ENCODE measurements at regions of chr6 and their contacts with region 1.

Region 1: DNA sequence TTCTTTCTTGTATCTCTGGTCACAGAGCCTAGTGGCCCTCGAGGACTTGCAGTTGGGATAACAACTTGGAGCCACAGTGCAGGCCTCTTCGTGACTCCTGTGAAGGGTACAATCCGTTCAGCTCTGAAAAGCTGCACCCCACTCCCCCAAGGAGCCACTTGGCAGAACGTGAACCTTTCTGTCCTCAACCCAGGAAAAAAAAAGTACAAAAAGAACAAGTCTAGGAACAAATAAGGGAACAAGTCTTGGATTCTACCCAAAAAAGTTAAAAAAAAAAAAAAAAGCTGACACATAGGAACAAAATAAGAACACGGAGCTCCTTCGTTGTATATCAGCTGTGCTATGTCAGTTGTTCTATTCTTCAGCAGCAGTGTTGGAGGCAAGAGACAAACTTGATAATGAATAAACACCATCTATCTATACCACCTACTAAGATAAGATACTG is 77.9 kb upstream of the TULP1 start:
- DNase-seq: no peak
- ATAC-seq: no peak
- H3K4me3 ChIP-seq: no peak overlapping the region
- H3K4me3 Mint-ChIP-seq: no peak overlapping the region
- H3K27ac ChIP-seq: peak overlapping the region in 1 of 2 experiments; percentile 46
- H3K27ac Mint-ChIP-seq: peak overlapping the region; percentile 94
- H3K4me1 ChIP-seq: peaks cover 86% of the 10 kb centered on the region
- H3K4me1 Mint-ChIP-seq: peaks cover 92% of the 10 kb centered on the region
- H3K27me3 ChIP-seq: no peaks in the 10 kb centered on the region
- H3K27me3 Mint-ChIP-seq: no peaks in the 10 kb centered on the region
- CTCF ChIP-seq: no peak

Region 2: GRCh38 chr6:35340910-35341309 is 249.7 kb before region 1 on chr6:
- CTCF ChIA-PET with region 1: no interaction called
- POLR2A ChIA-PET with region 1: no interaction called
- intact Hi-C with region 1: no loop called
- DNase-seq: no peak
- ATAC-seq: no peak
- H3K4me3 ChIP-seq: no peak overlapping the region
- H3K4me3 Mint-ChIP-seq: no peak overlapping the region
- H3K27ac ChIP-seq: no peak overlapping the region
- H3K27ac Mint-ChIP-seq: no peak overlapping the region
- H3K4me1 ChIP-seq: peaks cover 29% of the 10 kb centered on the region
- H3K4me1 Mint-ChIP-seq: peaks cover 40% of the 10 kb centered on the region
- H3K27me3 ChIP-seq: no peaks in the 10 kb centered on the region
- H3K27me3 Mint-ChIP-seq: no peaks in the 10 kb centered on the region
- CTCF ChIP-seq: no peak

Region 3: DNA sequence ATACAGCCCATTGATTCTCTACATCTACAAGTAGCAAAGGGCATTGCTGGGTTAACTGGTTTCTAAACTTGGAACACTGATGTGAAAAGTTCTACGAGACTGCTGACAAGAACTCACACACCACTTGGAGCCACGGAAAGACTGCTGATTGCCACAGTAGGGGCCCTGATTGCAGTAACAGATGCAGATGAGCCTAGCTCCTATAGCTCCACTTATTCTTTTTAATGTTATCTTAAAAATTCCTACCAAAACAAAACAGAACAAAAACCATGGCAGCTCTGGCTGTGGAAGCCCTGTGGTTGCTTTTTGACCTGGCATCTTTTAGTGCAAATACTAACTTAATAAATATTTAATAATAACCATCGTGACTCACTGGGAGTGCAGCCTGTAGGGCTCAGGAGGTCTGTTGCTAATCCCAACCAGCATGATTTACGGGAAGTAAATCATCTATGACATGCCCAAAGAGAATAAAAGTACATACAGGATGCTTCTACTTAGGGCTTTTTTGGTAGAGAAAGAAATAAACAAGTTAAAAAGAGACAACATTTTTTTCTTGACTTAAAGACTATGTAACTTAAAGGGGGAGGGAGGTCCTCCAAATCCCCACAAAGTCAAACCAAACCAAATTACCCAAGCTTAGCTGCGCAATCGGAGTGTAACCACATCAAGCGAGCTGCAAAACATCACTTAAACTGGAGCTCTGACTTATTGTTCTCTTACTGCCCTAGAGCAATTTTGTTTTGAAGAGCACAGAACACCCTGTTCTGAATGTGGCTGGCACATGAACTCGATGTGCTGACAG is 10.9 kb after region 1 on chr6:
- CTCF ChIA-PET with region 1: interaction called, 51 read pairs
- POLR2A ChIA-PET with region 1: interaction called, 81 read pairs
- intact Hi-C with region 1: loop called (anchors 1 to 2 kb)
- DNase-seq: peak; percentile 36 to 94 (median 69)
- ATAC-seq: peak; percentile 78
- H3K4me3 ChIP-seq: peak overlapping the region; percentile 27 to 47
- H3K4me3 Mint-ChIP-seq: peak overlapping the region; percentile 76
- H3K27ac ChIP-seq: peak overlapping the region; percentile 50 to 63
- H3K27ac Mint-ChIP-seq: peak overlapping the region; percentile 93
- H3K4me1 ChIP-seq: peaks cover 89% of the 10 kb centered on the region
- H3K4me1 Mint-ChIP-seq: peaks cover 76% of the 10 kb centered on the region
- H3K27me3 ChIP-seq: no peaks in the 10 kb centered on the region
- H3K27me3 Mint-ChIP-seq: no peaks in the 10 kb centered on the region
- CTCF ChIP-seq: no peak

Measured in CD8-positive, alpha-beta T cell (primary cell).